Activated naive CD4-positive, alpha-beta T cell treated with anti-CD3 and anti-CD28 coated beads for 36 hours (primary cell): ENCODE measurements at regions of chr4 and their contacts with region 1.

Region 1: DNA sequence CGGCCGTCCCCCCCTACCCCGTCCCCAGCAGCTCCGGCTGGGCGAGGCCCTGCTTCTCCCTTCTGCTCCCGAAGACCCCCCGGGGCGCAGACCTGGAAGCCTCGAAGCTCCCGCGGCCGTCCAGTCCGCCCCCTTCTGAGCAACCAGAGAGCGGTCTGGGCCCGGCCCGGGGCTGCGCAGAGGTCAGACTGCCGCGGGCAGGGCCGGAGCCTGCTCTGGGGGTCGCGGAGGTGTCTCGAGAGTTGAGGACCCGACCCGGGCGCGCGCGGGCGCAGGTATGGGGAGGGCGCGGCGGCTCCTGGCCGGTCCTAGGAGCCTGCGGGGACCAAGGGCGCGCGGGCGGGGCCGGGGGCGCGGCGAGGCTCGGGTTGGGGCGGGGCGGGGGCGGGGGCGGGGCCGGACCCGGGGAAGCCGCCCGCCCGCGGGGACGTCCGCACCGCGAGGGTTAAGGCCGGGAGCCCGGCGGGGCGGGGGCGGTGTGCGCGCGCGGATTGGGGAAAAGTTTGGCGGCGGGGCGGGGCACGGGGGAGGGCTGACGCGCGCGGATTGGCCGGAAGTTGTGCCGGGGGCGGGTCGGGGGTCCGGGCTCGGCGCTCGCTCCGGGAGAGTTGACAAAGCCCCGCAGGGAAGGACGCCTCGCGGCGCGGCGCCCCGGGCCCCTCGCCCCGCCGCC is at the start of gene FGFRL1:
- DNase-seq: peak; percentile 95
- H3K4me3 Mint-ChIP-seq: peak within 1 kb of the TSS; percentile 73
- H3K27ac Mint-ChIP-seq: peak within 1 kb of the TSS; percentile 46
- H3K4me1 Mint-ChIP-seq: peaks cover 11% of the 10 kb centered on the region
- H3K27me3 Mint-ChIP-seq: peaks cover 26% of the 10 kb centered on the region
- total RNA-seq, gene FGFRL1: 7.6 to 8.0 TPM

Region 2: DNA sequence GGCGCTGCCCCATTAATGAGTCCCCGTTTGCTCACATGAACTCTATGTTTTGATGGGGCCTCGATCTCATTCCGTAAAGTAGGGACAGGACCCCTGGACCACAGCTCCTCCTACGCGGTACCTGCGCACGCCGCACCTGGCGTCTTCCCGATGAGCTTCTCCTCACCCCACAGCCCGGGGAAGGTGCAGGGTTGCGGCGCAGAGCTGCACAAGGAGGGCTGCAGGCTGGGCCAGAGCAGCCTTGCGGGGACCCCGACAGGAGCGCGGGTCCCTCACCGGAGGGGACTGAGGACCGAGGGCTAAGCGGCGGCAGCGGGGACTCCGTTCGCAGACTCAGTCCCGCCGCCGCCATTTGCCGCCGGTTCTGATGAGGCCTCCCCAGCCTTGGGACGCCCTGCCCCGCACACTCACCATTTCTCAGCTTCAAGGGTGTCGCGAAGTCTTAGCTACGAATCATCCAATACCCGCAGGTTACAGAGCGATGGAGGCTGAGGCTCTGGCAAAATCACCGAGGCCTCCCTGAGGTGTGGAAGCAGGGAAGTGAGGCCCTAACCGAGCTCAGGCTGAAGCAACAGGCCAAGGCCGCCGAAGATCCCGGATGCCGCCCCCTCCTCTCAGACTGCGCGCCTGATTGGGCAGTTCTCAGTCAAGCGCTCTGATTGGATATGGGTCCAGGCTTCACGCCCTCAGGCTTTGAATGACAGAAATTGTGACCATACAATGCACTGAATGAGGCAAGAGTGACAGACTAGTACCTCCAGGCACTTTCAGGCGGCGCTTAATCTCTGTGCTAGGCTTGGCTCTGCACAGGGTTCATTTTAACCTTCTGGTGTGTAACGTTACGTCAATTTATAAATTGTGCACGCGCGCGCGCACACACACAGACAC is 537.3 kb before region 1 on chr4:
- CTCF ChIA-PET with region 1: no interaction called
- intact Hi-C with region 1: loop called (anchors 5 kb)
- DNase-seq: peak; percentile 97
- H3K4me3 Mint-ChIP-seq: peak overlapping the region; percentile 99
- H3K27ac Mint-ChIP-seq: peak overlapping the region; percentile 99
- H3K4me1 Mint-ChIP-seq: peaks cover 19% of the 10 kb centered on the region
- H3K27me3 Mint-ChIP-seq: no peaks in the 10 kb centered on the region

Region 3: DNA sequence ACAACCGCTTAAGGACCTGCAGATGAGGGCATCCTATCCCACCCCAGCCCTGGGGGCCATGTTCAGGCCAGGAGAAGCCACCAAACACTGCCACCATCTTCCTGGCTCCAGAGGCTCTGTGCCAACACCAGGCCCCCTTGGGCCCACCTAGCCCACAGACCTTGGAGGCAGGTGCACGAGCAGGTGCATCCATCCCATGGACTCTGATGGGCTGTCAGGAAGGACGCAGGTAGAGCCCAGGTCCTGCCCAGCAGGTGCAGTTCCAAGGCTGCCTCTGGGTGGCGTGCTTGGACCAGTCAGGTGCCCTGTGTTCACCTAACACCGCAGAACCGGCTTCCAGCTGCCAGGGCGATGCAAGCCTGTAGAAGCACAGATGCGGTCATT is 408.6 kb before region 1 on chr4:
- CTCF ChIA-PET with region 1: no interaction called
- intact Hi-C with region 1: no loop called
- DNase-seq: peak; percentile 86
- H3K4me3 Mint-ChIP-seq: no peak overlapping the region
- H3K27ac Mint-ChIP-seq: no peak overlapping the region
- H3K4me1 Mint-ChIP-seq: peaks cover 2% of the 10 kb centered on the region
- H3K27me3 Mint-ChIP-seq: peaks cover 12% of the 10 kb centered on the region

Region 4: GRCh38 chr4:705278-706082 is 305.7 kb before region 1 on chr4 and contains the start of gene PCGF3:
- CTCF ChIA-PET with region 1: no interaction called
- intact Hi-C with region 1: loop called (anchors 1 kb)
- DNase-seq: peak; percentile 96
- H3K4me3 Mint-ChIP-seq: peak within 1 kb of the TSS; percentile 76
- H3K27ac Mint-ChIP-seq: no peak within 1 kb of the TSS
- H3K4me1 Mint-ChIP-seq: peaks cover 13% of the 10 kb centered on the region
- H3K27me3 Mint-ChIP-seq: no peaks in the 10 kb centered on the region
- total RNA-seq, gene PCGF3: 24.7 to 25.9 TPM

Region 5: DNA sequence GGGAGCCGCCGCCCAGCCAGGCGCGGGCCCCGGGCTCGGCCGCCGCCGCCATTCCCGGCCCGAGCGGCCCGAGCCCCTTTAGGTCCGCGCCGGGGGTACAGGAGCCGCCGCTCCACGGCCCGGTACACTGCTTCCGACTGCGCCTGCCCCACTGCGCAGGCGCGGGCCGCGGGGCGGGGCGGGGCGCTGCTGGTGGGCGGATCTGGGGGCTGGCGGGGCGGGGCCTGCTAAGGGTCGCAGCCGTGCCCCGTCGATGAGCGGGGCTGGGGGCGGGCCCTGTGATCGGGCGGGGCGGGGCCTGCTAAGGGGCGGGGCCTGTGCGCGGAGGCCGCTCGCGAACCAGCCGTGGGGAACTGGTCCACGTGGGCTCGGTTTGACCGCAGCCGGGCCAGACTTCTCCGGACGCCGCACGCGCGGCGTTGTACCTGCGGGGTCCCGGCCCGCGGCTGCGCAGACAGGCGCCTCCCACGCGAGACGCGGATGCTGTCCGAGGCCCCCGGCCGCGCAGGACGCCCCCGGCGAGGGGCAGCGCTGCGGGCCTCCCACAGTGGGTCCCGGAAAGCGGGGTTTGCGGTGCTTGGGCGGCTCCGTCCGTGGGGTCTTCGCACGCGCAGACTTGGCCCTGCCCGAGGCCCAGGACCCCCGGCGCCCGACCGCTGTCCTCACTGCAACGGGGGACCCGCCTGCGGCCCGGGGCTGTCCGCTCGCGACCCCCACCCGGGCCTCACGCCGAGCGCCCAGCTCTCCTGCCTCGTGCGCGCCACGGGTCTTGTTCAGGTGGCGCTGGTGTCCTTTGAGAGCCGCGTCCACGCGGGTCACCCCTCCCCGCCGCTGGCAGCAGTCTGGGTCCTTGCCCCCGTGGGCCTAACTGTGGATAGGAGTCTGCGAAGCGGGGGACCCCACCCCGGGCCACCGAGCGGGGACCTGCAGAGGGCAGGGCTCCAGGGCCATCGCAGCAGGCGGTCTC is 37.4 kb before region 1 on chr4 and contains the start of gene DGKQ:
- CTCF ChIA-PET with region 1: no interaction called
- intact Hi-C with region 1: loop called (anchors 1 kb)
- DNase-seq: peak; percentile 81
- H3K4me3 Mint-ChIP-seq: peak within 1 kb of the TSS; percentile 59
- H3K27ac Mint-ChIP-seq: no peak within 1 kb of the TSS
- H3K4me1 Mint-ChIP-seq: peaks cover 5% of the 10 kb centered on the region
- H3K27me3 Mint-ChIP-seq: no peaks in the 10 kb centered on the region
- total RNA-seq, gene DGKQ: 10.8 to 11.1 TPM

Region 6: DNA sequence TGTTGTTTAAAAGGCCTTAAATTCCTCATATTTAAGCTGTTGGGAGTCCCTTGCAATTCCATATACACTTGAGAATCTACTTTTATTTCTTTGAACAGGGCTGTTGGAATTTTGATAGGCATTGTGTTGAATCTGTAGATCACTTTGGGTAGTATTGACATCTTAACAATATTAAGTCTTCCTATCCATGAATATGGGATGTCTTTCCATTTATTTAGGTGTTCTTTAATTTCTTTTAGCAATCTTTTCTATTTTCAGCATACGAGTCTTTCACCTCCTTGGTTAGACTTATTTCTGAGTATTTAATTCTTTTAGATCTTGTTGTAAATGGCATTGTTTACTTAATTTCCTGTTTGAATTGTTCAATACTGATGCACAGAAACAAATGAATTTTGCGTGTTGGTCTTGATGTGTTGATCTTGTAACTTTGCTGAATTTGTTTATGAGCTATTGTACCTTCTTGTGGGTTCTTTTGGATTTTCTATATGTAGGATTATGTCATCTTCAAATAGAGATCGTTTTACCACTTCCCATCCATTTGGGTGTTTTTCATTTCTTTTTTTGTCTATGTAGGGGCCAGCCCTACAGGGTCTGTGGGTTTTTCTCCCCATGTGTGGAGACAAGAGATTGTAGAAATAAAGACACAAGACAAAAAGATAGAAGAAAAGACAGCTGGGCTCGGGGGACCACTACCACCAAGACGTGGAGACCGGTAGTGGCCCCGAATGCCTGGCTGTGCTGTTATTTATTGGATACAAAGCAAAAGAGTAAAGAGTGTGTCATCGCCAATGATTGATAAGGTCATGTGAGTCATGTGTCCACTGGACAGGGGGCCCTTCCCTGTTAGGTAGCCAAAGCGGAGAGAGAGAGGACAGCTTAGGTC is 256.0 kb after region 1 on chr4:
- CTCF ChIA-PET with region 1: no interaction called
- intact Hi-C with region 1: loop called (anchors 5 kb)
- DNase-seq: no peak
- H3K4me3 Mint-ChIP-seq: peak overlapping the region; percentile 58
- H3K27ac Mint-ChIP-seq: peak overlapping the region; percentile 65
- H3K4me1 Mint-ChIP-seq: peaks cover 10% of the 10 kb centered on the region
- H3K27me3 Mint-ChIP-seq: no peaks in the 10 kb centered on the region

Region 7: GRCh38 chr4:1289207-1290164 is 278.3 kb after region 1 on chr4 and contains the start of gene MAEA:
- CTCF ChIA-PET with region 1: no interaction called
- intact Hi-C with region 1: loop called (anchors 1 kb)
- DNase-seq: peak; percentile 98
- H3K4me3 Mint-ChIP-seq: peak within 1 kb of the TSS; percentile 87
- H3K27ac Mint-ChIP-seq: peak within 1 kb of the TSS; percentile 82
- H3K4me1 Mint-ChIP-seq: peaks cover 40% of the 10 kb centered on the region
- H3K27me3 Mint-ChIP-seq: no peaks in the 10 kb centered on the region
- total RNA-seq, gene MAEA: 25.2 to 29.4 TPM

Region 8: GRCh38 chr4:1721004-1721665 is 710.0 kb after region 1 on chr4 and contains the starts of genes TACC3 and TMEM129:
- CTCF ChIA-PET with region 1: no interaction called
- intact Hi-C with region 1: loop called (anchors 5 kb)
- DNase-seq: peak; percentile 96
- H3K4me3 Mint-ChIP-seq: peak within 1 kb of the TSS; percentile 94
- H3K27ac Mint-ChIP-seq: peak within 1 kb of the TSS; percentile 98
- H3K4me1 Mint-ChIP-seq: peaks cover 53% of the 10 kb centered on the region
- H3K27me3 Mint-ChIP-seq: no peaks in the 10 kb centered on the region
- total RNA-seq, gene TACC3: 246 to 264 TPM
- total RNA-seq, gene TMEM129: 19.0 to 19.8 TPM